ENCODE measurements at regions of chr3 and their contacts with region 1.

Region 1: DNA sequence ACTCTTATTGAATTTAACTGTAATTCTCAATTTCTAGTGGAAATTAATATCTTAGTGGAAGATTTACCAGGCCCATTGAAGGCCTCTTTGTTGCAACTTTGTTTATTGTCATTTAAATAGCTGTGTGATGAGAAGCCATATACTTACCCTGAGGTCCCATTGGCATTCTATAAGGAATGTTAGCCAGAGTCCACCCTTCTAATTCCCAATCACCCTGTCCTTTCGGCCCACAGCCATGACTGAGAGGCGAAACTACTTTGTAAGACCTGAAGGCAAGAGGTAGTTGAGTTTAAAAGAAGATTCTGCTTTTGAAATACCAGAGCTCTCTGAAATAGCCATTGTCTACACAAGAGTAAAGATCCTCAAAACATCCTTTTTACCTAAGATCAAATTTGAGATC is 290.5 kb upstream of the RARB start:
- DNase-seq: no peak
- ATAC-seq: no peak
- H3K4me3 ChIP-seq: no peak overlapping the region
- H3K4me3 Mint-ChIP-seq: no peak overlapping the region
- H3K27ac ChIP-seq: no peak overlapping the region
- H3K27ac Mint-ChIP-seq: no peak overlapping the region
- H3K4me1 ChIP-seq: no peaks in the 10 kb centered on the region
- H3K4me1 Mint-ChIP-seq: no peaks in the 10 kb centered on the region
- H3K27me3 ChIP-seq: no peaks in the 10 kb centered on the region
- H3K27me3 Mint-ChIP-seq: no peaks in the 10 kb centered on the region
- CTCF ChIP-seq: no peak

Region 2: DNA sequence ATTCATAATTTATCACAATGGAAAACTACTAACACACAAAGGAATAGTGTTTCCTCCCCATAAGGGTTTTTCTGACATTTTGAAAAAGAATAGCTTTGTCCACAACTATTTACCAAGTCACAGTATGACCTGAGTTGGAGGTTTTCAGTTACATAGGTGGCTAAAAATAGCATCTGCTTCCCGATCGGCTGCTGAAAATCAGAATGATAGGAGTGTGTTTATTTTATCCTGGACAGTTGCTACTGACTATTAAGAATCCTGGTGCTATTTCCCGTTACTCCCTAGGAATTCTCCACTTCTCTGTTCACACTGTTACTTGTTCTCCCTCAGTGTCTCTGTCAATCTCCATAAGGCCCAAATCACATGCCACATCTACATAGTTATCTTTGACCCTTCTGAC is 63.5 kb before region 1 on chr3:
- CTCF ChIA-PET with region 1: no interaction called
- POLR2A ChIA-PET with region 1: no interaction called
- intact Hi-C with region 1: loop called in 1 of 2 experiments (anchors 2 kb)
- DNase-seq: no peak
- ATAC-seq: no peak
- H3K4me3 ChIP-seq: no peak overlapping the region
- H3K4me3 Mint-ChIP-seq: no peak overlapping the region
- H3K27ac ChIP-seq: no peak overlapping the region
- H3K27ac Mint-ChIP-seq: no peak overlapping the region
- H3K4me1 ChIP-seq: no peaks in the 10 kb centered on the region
- H3K4me1 Mint-ChIP-seq: no peaks in the 10 kb centered on the region
- H3K27me3 ChIP-seq: no peaks in the 10 kb centered on the region
- H3K27me3 Mint-ChIP-seq: no peaks in the 10 kb centered on the region
- CTCF ChIP-seq: no peak

Measured in CD8-positive, alpha-beta T cell (primary cell).